Activated T-helper 1 cell treated with anti-CD3 and anti-CD28 coated beads, Interleukin-12 subunit alpha, Interleukin-12 subunit beta, Interleukin-2, Interleukin-4 antibody, amounts not matched to agents 30 ng/mL and 10 ng/mL and 1 ng/mL, durations not matched to agents 14 hours and 24 hours and 36 hours (primary cell): ENCODE measurements at regions of chr5 and their contacts with region 1.

Region 1: DNA sequence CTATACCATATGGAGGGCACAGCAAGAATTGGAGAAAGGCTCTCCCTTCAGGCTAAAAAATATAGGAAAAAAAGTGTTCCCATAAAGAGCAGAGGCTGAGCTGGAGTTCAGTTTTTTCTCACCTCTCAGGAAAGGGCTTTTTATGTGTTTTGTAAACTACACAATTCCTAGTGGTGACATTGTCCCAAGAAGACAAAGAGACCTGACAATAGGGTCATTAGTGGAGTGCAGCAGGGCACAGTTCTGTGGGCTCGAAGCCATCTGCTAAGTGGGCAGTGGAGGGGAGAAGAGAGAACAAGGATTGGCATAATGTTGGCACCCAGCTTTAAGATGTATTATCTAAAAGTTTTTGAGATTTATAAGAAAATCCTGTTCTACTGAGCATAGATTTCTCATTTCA is 162.5 kb downstream of the HCN1 start:
- DNase-seq: no peak
- H3K4me3 Mint-ChIP-seq: no peak overlapping the region
- H3K27ac Mint-ChIP-seq: no peak overlapping the region
- H3K4me1 Mint-ChIP-seq: no peaks in the 10 kb centered on the region
- H3K27me3 Mint-ChIP-seq: no peaks in the 10 kb centered on the region

Region 2: DNA sequence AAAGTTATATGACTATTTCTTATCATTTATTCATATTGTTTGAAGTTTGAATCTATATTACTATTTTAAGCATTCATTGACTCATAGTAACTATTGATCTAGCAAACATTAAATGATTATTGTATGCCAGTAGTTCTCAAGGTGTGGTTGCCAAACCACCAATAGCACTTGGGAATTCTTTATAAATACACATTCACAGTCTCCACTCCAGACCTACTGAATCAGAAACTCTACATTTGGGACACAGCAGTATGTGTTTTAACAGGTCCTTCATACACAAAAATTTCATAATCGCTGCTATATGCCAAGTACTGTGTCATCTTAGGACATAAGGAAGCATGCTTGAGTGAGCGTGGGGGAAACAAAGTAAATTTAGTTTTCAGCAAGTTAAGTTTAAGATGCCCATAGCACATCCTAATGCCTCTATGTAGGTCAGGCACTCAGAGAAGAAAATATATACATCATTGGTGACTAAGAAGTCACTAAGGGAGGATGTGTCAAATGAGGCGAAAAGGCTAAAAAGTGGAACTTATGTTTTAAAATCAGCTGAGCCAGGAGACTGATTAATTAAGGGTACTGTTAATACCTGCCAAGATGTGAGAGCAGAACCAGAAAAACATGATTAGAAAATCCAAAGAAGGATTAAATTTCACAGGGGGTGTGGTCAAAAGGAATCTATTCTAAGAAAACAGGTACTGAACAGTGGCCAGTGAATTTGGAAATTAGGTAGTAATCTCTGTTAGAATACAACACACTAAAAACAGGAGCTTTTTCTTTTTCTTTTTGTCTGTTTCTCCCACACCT is 178.3 kb before region 1 on chr5:
- intact Hi-C with region 1: no loop called
- DNase-seq: no peak
- H3K4me3 Mint-ChIP-seq: no peak overlapping the region
- H3K27ac Mint-ChIP-seq: no peak overlapping the region
- H3K4me1 Mint-ChIP-seq: no peaks in the 10 kb centered on the region
- H3K27me3 Mint-ChIP-seq: no peaks in the 10 kb centered on the region

Region 3: DNA sequence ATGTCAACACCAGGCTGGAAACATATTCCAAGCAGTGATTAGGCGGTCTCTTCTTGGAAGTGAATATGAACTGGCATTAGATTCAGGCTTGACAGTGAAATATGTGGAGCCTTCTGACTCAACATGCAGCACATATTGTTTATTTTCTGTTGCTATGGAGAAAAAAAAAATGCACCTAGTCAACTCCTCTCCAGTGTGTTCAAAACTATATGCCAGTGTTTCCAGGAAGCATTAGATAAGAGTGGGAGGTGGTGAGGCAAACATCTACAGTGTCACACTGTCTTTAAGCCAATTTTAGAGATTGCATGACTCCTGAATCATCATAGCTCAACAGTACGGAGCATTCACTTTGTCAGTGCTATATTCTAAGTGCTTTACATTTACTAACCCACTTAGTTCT is 44.6 kb after region 1 on chr5:
- intact Hi-C with region 1: loop called (anchors 2 kb)
- DNase-seq: no peak
- H3K4me3 Mint-ChIP-seq: no peak overlapping the region
- H3K27ac Mint-ChIP-seq: no peak overlapping the region
- H3K4me1 Mint-ChIP-seq: no peaks in the 10 kb centered on the region
- H3K27me3 Mint-ChIP-seq: no peaks in the 10 kb centered on the region